Mammary epithelial cell (primary cell): ENCODE measurements at regions of chr1 and their contacts with region 1.

Region 1: GRCh38 chr1:171583581-171584201 is 38.4 kb upstream of the MYOCOS start:
- DNase-seq: no peak
- H3K4me3 ChIP-seq: no peak overlapping the region
- H3K27ac ChIP-seq: no peak overlapping the region
- H3K4me1 ChIP-seq: no peaks in the 10 kb centered on the region
- H3K27me3 ChIP-seq: no peaks in the 10 kb centered on the region
- CTCF ChIP-seq: no peak

Region 2: GRCh38 chr1:171506525-171507304 is 77.0 kb before region 1 on chr1:
- CTCF ChIA-PET with region 1: no interaction called
- dilution Hi-C with region 1: no loop called
- in situ Hi-C with region 1: no loop called
- intact Hi-C with region 1: loop called (anchors 5 kb)
- DNase-seq: no peak
- H3K4me3 ChIP-seq: no peak overlapping the region
- H3K27ac ChIP-seq: no peak overlapping the region
- H3K4me1 ChIP-seq: no peaks in the 10 kb centered on the region
- H3K27me3 ChIP-seq: no peaks in the 10 kb centered on the region
- CTCF ChIP-seq: no peak

Region 3: GRCh38 chr1:171530676-171531075 is 53.0 kb before region 1 on chr1:
- CTCF ChIA-PET with region 1: no interaction called
- dilution Hi-C with region 1: no loop called
- in situ Hi-C with region 1: no loop called
- intact Hi-C with region 1: loop called (anchors 5 kb)
- DNase-seq: no peak
- H3K4me3 ChIP-seq: no peak overlapping the region
- H3K27ac ChIP-seq: no peak overlapping the region
- H3K4me1 ChIP-seq: no peaks in the 10 kb centered on the region
- H3K27me3 ChIP-seq: no peaks in the 10 kb centered on the region
- CTCF ChIP-seq: no peak